Cardiac septum (tissue), 1 donor: ENCODE measurements at regions of chr18 and their contacts with region 1.

Region 1: DNA sequence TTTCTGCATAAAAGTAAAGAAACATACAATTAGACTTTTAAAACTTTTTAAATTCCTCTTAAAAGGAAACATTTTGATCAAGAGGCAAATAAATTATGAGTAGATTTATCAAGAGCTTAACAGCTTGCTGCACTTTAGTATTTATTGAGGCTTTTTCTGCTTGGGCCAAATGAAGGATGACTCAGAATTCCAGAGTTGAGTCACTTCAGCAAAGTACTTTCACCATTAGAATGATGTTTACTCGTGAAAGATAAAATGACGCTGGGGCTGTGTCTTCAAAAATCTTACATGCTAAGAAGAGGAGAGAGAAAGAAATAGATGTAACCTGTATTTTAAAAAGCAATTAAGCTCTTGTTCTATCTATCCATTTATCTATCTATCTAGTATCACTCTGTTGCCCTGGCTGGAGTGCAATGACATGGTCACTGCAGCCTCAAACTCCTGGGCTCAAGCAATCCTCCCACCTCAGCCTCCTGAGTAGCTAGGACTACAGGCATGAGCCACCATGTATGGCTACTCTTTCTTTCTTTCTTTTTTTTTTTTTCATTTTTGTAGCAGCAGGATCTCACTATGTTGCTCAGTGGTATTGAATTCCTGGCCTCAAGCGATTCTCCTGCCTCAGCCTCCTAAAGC is 75.3 kb upstream of the RIOK3 start:
- DNase-seq: no peak

Region 2: DNA sequence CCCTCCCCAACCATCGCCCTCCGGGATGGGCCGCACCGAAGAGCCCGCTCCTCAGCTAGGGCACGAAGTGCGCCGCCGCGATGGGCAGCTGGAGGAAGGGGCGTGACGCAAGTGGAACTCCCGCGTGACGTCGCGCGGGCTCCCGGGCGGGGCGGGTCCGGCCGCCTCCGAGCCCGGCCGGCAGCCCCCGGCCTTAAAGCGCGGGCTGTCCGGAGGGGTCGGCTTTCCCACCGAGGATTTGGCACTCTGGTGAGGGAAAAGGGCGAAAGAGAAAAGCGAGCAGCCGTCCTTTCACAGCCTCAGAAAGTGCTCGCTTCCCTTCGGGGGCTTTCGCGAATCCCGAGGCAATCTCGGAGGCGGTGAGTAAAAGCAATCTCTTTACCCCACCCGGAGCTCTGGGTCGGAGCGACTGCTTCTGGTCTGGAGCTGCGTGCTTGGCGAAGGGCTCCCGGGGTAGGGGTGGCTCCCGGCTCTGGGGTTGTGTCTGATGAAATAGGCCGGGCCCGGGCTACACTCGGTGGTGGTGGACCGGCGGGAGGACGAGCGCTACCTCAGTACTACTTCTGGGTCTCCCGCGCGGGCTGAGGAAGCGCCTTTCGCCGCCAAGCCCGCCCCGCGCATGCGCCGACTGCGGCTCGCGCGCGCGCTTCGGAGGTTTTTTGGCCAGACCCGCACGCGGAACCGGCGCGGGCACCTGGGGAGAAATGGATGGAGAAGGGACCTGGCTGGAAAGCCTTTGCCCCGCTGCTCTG is 444.4 kb before region 1 on chr18 and contains the start of gene RBBP8:
- intact Hi-C with region 1: no loop called
- DNase-seq: peak; percentile 96
- total RNA-seq, gene RBBP8: 7.2 TPM

Region 3: GRCh38 chr18:23032030-23032582 is 345.7 kb before region 1 on chr18:
- intact Hi-C with region 1: loop called (anchors 5 kb)
- DNase-seq: no peak